Heart left ventricle (tissue), 16 donors: ENCODE measurements at regions of chr17 and their contacts with region 1.

Region 1: GRCh38 chr17:21511363-21512198 is 135.4 kb downstream of the KCNJ12 start:
- DNase-seq: peak; percentile 83 to 92 (median 85)
- ATAC-seq: peak; percentile 87 to 98 (median 94)
- H3K4me3 ChIP-seq: peak overlapping the region; percentile 22 to 82 (median 63)
- H3K27ac ChIP-seq: peak overlapping the region in 9 of 12 donors; percentile 10 to 75 (median 63)
- H3K4me1 ChIP-seq: peaks cover 0 to 21% (median 11%) of the 10 kb centered on the region in 12 donors
- H3K27me3 ChIP-seq: peaks cover 0 to 4% (median 0%) of the 10 kb centered on the region in 9 donors
- CTCF ChIP-seq: peak; percentile 62 to 91 (median 84)
- POLR2A ChIP-seq: no peak

Region 2: DNA sequence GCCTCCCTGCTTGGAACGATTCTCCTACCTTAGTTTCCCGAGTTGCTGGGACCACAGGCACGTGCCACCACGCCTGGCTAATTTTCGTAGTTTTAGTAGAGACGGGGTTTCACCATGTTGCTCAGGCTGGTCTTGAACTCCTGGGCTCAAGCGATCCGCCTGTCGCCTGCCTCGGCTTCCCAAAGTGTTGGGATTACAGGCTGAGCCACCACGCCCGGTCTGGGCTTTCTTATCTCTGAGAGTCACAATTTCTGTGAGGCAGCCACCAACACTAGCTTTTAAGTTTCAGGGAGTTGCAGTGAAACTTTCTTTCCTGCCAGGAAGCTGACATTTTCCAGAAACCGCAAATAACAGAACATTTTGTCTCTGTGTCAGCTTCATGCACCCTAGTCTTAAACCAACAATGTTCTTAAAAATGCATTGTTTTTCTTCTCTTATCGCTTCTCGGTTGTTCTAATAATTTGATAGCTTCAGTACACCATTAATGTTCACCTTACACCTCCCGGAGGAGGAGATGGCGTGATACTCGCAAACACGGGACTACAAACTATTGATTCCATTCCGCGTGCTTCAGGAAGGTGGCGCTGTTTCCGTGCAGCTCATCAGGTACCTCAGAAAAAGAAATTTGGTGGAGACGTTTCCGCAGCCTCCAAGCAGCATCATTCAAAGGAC is 392.2 kb before region 1 on chr17:
- intact Hi-C with region 1: loop called in 7 of 10 experiments (anchors 5 kb)
- DNase-seq: peak; percentile 67 to 75 (median 70)
- ATAC-seq: peak; percentile 47 to 86 (median 79)
- H3K4me3 ChIP-seq: peak overlapping the region in 4 of 12 donors; percentile 8 to 31 (median 17)
- H3K27ac ChIP-seq: peak overlapping the region in 2 of 12 donors; percentile 58 to 68
- H3K4me1 ChIP-seq: peaks cover 0 to 19% (median 4%) of the 10 kb centered on the region in 12 donors
- H3K27me3 ChIP-seq: no peaks in the 10 kb centered on the region
- CTCF ChIP-seq: peak; percentile 73 to 88 (median 78)
- POLR2A ChIP-seq: no peak

Region 3: GRCh38 chr17:21275579-21276263 is 235.9 kb before region 1 on chr17:
- intact Hi-C with region 1: loop called in 9 of 10 experiments (anchors 1 to 10 kb)
- DNase-seq: peak; percentile 95 to 98 (median 96)
- ATAC-seq: peak; percentile 94 to 98 (median 97)
- H3K4me3 ChIP-seq: peak overlapping the region; percentile 40 to 81 (median 64)
- H3K27ac ChIP-seq: peak overlapping the region; percentile 14 to 87 (median 74)
- H3K4me1 ChIP-seq: peaks cover 0 to 36% (median 16%) of the 10 kb centered on the region in 12 donors
- H3K27me3 ChIP-seq: no peaks in the 10 kb centered on the region
- CTCF ChIP-seq: peak in 3 of 12 donors; percentile 8 to 10 (median 9)
- POLR2A ChIP-seq: peak in 1 of 2 donors; percentile 60

Region 4: DNA sequence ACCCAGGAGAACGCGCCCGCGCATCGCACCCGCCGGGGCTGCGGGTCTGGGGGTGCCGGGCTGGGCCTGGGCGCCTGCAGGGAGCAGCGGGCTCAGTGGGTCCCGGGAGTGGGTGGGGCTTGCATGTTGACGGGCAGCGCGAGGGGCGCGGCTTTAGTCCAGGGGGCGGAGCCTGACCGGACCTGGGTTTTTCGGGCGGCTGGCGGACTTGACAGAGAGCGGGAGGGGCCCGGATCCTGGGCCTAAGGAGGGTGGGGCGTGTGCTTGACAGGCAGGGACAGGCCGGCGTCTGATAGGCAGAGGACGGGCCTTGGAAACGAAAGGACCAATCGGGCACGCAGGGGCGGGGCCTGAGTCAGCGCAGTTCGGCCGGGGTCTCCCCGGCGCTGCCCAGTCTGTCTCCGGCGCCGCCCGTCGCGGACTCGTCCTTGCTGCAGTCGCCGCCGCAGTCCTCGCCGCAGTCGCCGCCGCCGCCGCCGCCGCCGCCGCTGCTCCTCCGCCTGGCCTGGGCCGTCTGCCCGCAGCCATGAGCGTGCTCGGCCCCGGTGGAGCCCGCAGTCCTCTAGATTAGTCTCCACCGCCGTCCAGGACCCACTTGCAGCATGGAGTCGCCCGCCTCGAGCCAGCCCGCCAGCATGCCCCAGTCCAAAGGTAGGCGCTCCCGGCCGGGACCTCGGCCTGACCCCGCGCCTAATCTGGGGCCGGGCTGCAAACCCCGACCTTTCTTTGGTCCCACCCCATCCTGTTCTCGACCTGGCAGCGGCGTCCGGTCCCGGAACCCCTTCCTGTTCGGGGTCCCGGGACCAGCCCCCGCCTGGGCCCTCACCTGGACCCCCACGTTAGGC is 227.0 kb before region 1 on chr17 and contains the start of gene MAP2K3:
- intact Hi-C with region 1: loop called in 9 of 10 experiments (anchors 1 to 10 kb)
- DNase-seq: peak; percentile 99 to 100 (median 100)
- ATAC-seq: peak; percentile 79 to 89 (median 86)
- H3K4me3 ChIP-seq: peak within 1 kb of the TSS; percentile 49 to 99 (median 92)
- H3K27ac ChIP-seq: peak within 1 kb of the TSS; percentile 83 to 99 (median 94)
- H3K4me1 ChIP-seq: peaks cover 16 to 72% (median 50%) of the 10 kb centered on the region in 12 donors
- H3K27me3 ChIP-seq: no peaks in the 10 kb centered on the region
- CTCF ChIP-seq: peak in 1 of 12 donors; percentile 12
- POLR2A ChIP-seq: peak; percentile 90 to 99
- total RNA-seq, gene MAP2K3: 29.4 to 170 (median 54.4) TPM

Region 5: DNA sequence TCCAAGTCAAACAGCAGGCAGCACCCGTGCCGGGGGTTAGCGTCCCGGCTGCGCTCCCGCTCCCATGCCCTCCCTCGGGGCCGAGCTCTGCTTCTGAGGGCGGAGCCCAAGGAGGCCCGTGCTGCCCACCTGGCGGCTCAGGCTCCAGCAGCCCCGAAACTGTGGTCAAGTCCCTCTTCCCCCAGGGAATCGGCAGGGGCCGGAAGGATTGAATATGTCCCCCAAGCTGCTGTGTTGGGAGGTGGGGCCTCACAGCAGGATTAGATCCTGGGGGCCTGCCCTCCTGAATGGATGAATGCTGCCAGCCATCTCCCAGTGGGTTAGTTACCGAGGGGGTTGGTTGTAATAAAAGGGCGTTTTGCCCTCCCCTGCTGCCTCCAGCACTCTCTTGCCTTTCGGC is 193.1 kb before region 1 on chr17:
- intact Hi-C with region 1: loop called in 3 of 10 experiments (anchors 5 to 10 kb)
- DNase-seq: no peak
- ATAC-seq: no peak
- H3K4me3 ChIP-seq: no peak overlapping the region
- H3K27ac ChIP-seq: no peak overlapping the region
- H3K4me1 ChIP-seq: peaks cover 0 to 10% (median 3%) of the 10 kb centered on the region in 12 donors
- H3K27me3 ChIP-seq: no peaks in the 10 kb centered on the region
- CTCF ChIP-seq: no peak
- POLR2A ChIP-seq: no peak

Region 6: DNA sequence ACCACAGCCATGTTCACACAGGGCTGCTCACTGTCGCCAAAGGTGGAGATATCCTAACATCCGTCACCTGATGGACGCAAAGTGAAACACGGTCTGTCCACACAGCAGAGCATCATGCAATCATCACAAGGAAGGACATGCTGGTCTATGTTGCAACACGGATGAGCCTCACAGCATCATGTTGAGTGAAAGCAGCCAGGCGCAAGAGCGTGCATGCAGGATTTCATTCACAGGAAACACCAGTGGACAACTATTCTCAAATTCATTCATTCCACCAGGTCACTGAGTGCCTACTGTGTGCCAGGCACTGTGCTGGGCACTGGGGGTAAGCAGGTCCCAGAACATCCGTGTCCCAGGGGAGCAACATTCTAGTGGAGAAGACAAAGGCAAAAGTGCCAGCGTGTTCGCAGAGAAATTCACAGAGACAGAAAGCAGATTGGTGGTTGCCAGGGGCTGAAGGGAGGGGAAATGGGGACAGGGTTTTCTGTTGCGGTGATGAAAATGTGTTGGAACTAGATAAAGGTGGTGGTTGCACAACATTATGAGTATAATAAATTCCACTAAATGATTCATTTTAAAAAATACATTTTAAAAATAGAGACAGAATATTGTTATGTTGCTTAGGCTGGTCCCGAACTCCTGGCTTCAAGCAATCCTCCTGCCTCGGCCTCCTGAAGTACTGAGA is 158.1 kb before region 1 on chr17:
- intact Hi-C with region 1: no loop called
- DNase-seq: peak in 1 of 5 donors; percentile 37
- ATAC-seq: no peak
- H3K4me3 ChIP-seq: no peak overlapping the region
- H3K27ac ChIP-seq: no peak overlapping the region
- H3K4me1 ChIP-seq: peaks cover 0 to 9% (median 2%) of the 10 kb centered on the region in 12 donors
- H3K27me3 ChIP-seq: no peaks in the 10 kb centered on the region
- CTCF ChIP-seq: no peak
- POLR2A ChIP-seq: no peak

Region 7: DNA sequence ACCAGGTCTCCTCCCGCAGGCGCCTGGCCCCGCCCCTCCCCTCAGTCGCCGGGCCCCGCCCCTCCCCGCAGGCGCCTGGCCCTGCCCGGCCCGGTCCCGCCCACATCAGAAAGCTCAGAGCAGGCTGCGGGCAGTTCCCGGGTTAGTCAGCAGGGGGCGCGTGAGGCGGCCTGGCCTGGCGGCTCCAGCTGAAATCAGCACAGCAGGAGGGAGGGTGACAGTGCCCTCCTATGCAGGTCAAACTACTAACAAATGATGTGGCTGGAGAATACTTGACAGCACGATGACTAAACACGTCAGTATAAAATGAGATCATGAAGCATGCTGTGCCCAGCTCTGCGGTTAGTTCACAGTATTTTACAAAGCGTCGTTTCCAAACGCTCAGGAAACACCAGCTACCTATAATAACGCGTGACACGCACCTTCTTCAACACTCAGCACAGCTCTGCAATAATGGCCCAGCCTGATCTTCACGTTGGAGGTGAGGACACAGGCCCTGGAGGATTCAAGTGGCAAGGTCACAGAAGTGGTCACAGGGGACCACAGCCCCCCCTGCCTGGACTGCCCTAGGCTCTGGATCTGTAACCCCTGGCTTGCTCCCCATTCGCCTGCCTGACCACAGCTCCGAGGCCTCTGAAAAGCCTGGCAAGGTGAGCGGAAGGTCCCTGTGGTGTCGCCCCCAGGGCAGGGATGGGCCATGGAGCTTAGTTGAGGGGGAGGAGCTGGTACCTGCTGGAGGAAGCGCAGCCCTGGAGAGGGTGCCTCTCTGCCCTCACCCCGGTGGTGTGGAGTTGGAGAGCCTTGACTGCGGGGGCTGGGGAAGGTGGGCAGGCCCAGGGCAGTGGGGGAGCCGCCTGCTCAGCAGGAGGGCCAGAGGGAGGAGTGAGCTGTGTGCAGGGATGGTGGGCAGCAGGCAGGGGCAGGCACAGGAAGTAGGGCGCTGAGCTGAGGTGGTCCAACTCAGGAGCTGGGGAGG is 54.2 kb before region 1 on chr17:
- intact Hi-C with region 1: loop called (anchors 1 to 2 kb)
- DNase-seq: peak; percentile 86 to 95 (median 90)
- ATAC-seq: peak; percentile 81 to 94 (median 93)
- H3K4me3 ChIP-seq: no peak overlapping the region
- H3K27ac ChIP-seq: no peak overlapping the region
- H3K4me1 ChIP-seq: peaks cover 0 to 15% (median 6%) of the 10 kb centered on the region in 12 donors
- H3K27me3 ChIP-seq: no peaks in the 10 kb centered on the region
- CTCF ChIP-seq: peak; percentile 91 to 99 (median 94)
- POLR2A ChIP-seq: no peak